Esophagus squamous epithelium (tissue), 5 donors: ENCODE measurements at regions of chr11 and their contacts with region 1.

Region 1: DNA sequence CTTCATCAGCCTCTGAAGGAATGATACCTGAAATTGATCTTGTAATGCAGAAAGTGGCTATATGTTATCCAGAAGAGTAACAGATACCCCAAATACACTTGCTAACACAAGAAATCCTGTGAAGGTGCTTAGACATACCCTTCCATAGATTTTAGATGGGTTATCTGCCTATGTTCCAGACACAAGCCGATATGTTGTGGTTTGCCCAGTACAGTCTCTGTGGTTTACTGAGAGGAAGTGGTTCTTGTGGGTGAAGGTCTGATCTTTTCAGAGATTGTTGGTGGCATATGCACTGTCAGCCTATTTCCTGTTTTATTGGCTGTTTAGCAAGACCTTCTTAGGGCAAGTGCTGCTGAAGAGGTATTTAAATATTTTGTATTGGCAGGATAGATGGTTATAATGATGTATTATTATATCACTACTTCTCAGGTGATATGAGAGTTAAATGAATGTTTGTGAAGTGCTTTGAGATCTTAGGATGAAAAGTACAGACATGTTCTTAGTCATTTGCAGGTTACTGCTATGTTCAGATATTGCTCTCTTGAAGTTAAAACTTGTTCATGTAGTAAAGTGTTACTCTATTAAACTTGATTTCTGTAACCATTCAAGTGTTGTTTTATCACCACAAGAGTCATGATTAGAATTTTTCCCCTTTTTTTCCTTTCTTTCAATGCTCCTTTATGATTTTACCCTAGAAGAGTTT is 8.2 kb downstream of the ARHGEF12 start:
- DNase-seq: no peak
- H3K4me3 ChIP-seq: no peak overlapping the region
- H3K27ac ChIP-seq: peak overlapping the region in 1 of 4 donors; percentile 34
- H3K4me1 ChIP-seq: peaks cover 5 to 100% (median 62%) of the 10 kb centered on the region in 3 donors
- H3K27me3 ChIP-seq: no peaks in the 10 kb centered on the region
- CTCF ChIP-seq: no peak
- POLR2A ChIP-seq: no peak

Region 2: GRCh38 chr11:120413480-120413879 is 69.0 kb after region 1 on chr11:
- intact Hi-C with region 1: loop called (anchors 10 kb)
- DNase-seq: no peak
- H3K4me3 ChIP-seq: no peak overlapping the region
- H3K27ac ChIP-seq: peak overlapping the region in 2 of 4 donors; percentile 24 to 31
- H3K4me1 ChIP-seq: peaks cover 0 to 42% (median 9%) of the 10 kb centered on the region in 3 donors
- H3K27me3 ChIP-seq: no peaks in the 10 kb centered on the region
- CTCF ChIP-seq: no peak
- POLR2A ChIP-seq: no peak